Posterior vena cava (tissue), 2 donors: ENCODE measurements at regions of chr15 and their contacts with region 1.

Region 1: GRCh38 chr15:39161096-39161495 is 419.8 kb upstream of the THBS1 start:
- DNase-seq: no peak

Region 2: GRCh38 chr15:38817427-38818156 is 343.5 kb before region 1 on chr15:
- intact Hi-C with region 1: loop called in 1 of 2 experiments (anchors 5 kb)
- DNase-seq: peak; percentile 90

Region 3: DNA sequence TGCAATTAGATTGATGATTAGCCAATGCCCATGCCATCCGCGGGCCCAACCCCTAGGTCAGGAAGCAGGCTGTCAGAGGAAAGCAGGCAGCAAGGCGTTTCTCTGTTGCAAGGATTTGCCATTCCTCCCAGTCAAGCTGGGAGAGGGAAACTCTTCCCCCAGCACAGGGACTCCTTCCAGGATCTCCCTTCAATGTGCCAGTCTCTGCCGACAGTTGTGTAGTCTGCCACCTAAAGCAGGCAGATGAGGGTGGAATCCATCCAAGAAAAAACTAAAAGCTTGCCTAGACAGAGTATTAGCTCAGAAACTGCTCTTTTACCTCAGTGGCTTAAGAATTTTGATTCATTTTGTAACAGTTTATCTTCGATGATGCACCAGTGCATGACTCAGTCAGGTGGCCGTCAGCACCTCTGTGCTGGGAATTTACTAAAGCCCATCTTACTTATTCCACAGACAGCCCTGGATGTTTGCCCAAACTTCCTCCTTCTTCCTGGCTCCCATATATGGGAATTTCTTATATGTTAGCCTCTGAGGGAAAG is 81.7 kb before region 1 on chr15:
- intact Hi-C with region 1: no loop called
- DNase-seq: no peak

Region 4: DNA sequence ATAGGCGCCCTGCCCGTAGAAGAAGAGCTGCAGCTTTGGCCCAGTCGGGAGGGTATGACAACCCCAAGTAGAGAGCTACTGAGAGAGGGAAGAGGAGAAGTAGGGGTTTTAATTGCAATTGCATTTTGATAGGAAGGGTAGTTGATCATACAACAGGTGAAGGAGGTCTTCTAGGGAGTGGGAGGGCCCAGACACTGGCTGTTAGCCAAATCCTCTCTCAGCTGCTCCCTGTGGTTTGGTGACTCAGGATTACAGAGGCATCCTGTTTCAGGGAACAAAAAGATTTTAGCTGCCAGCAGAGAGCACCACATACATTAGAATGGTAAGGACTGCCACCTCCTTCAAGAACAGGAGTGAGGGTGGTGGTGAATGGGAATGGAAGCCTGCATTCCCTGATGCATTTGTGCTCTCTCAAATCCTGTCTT is 10.9 kb after region 1 on chr15:
- intact Hi-C with region 1: no loop called
- DNase-seq: peak; percentile 79

Region 5: DNA sequence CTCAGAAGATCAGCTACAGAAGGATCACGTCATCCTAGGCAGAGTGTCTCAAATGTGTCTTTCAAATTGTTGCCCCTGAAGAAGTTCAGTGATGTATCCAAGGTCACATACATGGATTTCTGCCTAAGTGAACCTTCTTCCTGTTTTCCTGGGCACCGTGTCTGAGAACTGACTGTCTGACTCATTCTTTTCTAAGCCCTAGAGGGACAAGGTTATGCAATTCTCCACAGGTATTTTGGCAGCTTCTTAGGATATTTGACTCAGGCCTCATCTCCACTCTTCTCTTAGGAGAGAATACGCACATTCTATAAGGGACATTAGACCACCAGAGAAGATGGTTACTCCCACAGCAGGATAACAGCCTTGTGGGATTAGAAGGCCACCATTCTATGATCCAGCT is 27.8 kb after region 1 on chr15:
- intact Hi-C with region 1: no loop called
- DNase-seq: no peak